ENCODE measurements at regions of chr6 and their contacts with region 1.

Region 1: DNA sequence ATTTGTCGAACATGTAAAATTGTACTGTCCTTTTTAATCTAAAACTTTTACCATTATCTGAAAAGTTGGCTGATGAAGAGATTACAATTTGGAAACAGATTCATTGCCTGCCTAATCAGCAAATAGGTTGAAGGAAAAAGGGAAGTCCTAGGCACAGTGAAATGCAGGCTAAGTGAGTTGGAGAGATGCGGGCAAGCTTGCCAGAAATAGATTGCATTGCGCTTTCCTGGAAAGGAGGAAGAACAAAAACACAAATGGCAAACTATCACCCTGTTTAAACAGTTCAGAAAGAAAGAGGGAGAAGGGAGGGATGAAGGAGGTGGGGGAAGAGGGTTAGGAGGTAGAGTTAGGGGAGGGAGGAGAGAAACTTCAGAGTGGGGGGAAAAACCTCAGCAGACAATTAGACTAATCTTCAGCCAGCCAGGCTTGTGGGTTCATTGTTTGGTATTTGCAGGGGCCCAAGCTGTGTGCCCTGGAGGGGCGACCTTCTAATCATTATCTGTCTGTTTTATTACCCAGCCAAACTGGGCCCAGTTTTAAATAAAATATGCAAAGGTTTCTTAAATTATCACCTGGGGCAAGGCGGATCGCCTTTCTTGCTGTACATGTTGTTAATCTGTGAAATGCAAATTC is 465.2 kb downstream of the TFAP2B start:
- DNase-seq: no peak
- ATAC-seq: peak in 1 of 4 donors; percentile 29
- H3K4me3 ChIP-seq: no peak overlapping the region
- H3K27ac ChIP-seq: no peak overlapping the region
- H3K4me1 ChIP-seq: no peaks in the 10 kb centered on the region
- H3K27me3 ChIP-seq: no peaks in the 10 kb centered on the region
- CTCF ChIP-seq: no peak

Region 2: GRCh38 chr6:50979126-50979525 is 304.7 kb before region 1 on chr6:
- intact Hi-C with region 1: loop called in 1 of 3 experiments (anchors 10 kb)
- DNase-seq: no peak
- ATAC-seq: no peak
- H3K4me3 ChIP-seq: no peak overlapping the region
- H3K27ac ChIP-seq: no peak overlapping the region
- H3K4me1 ChIP-seq: no peaks in the 10 kb centered on the region
- H3K27me3 ChIP-seq: no peaks in the 10 kb centered on the region
- CTCF ChIP-seq: no peak

Region 3: DNA sequence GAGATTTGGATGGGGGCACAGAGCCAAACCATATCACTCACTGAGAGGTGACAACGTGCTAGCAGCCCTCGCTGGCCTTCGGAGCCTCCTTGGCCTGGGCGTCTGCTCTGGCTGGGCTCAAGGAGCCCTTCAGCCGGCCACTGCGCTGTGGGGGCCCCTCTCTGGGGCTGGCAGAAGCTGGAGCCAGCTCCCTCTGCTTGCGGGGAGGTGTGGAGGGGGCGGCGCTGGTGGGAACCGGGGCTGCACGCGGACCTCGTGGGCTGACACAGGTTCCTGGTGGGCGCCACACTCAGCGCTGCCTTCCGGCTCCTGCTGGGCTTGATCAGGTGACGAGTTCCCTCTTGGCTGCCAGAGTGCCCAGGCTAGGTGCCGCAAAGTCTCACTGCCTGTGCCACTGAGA is 314.3 kb after region 1 on chr6:
- intact Hi-C with region 1: no loop called
- DNase-seq: peak in 3 of 6 donors; percentile 13 to 63 (median 49)
- ATAC-seq: no peak
- H3K4me3 ChIP-seq: no peak overlapping the region
- H3K27ac ChIP-seq: no peak overlapping the region
- H3K4me1 ChIP-seq: no peaks in the 10 kb centered on the region
- H3K27me3 ChIP-seq: no peaks in the 10 kb centered on the region
- CTCF ChIP-seq: no peak

Measured in pancreas (tissue), 10 donors.